ENCODE measurements at regions of chr11 and their contacts with region 1.

Region 1: GRCh38 chr11:66834501-66834845 is 8.8 kb upstream of the RCE1 start:
- DNase-seq: no peak
- H3K4me3 ChIP-seq: no peak overlapping the region
- H3K27ac ChIP-seq: no peak overlapping the region
- H3K4me1 ChIP-seq: no peaks in the 10 kb centered on the region
- H3K27me3 ChIP-seq: no peaks in the 10 kb centered on the region
- CTCF ChIP-seq: no peak
- POLR2A ChIP-seq: no peak

Region 2: DNA sequence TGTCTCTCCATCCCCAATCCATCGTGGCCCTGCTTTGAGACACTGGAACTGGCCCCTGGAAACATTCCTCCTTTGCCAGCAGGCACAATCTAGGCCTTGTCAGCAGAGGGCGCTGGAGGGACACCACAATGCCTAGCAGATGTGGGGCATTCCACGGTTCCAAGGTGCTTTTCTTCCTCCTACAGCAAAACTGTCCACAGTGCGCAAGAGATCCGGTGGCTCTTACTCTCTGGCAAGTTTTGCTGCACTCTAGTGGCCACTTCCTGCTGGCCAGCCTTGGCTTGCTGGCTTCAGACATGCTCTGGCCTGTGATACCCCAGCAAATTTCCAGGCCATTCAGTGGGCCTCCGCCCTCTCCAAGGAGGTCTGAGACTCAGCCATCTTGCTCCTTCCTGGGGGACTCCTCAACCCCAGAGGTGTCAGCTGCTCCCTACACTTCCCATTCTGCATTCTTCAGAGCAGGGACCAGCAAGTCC is 139.7 kb before region 1 on chr11:
- intact Hi-C with region 1: loop called (anchors 5 kb)
- DNase-seq: peak; percentile 90 to 93
- H3K4me3 ChIP-seq: no peak overlapping the region
- H3K27ac ChIP-seq: peak overlapping the region in 1 of 2 donors; percentile 43
- H3K4me1 ChIP-seq: no peaks in the 10 kb centered on the region
- H3K27me3 ChIP-seq: no peaks in the 10 kb centered on the region
- CTCF ChIP-seq: peak; percentile 85 to 99 (median 92)
- POLR2A ChIP-seq: no peak

Region 3: DNA sequence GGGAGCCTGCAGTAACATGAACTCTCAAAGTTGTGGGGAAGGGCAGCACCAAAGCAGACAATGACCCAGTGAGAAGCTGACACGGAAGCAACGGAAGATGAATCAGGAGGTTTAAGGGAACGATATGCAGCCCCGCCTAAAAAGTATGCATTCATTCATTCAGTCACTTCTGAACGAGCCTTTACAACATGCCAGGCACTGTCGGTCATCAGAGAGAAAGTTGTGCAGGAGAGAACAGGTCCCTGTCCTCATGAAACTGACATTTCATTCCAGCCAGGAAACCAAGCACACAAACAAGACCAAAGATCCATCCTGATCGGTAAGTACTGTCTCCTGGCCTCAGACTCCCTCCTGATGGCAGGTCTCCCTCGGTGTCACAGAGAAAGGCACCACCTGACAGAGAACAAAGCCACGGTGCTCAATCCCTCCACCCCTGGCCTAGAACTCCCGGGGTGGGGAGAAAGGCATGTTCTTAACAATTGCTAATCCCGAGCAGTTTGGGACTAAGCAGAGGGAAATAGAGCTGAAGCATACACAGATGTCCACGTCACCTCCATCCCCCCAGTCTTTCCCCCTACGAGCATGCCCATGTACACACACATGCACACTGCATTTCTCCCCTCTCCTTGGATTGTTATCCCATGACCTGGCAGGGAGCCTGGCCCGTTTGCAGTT is 71.7 kb after region 1 on chr11:
- intact Hi-C with region 1: no loop called
- DNase-seq: peak in 1 of 2 donors; percentile 32
- H3K4me3 ChIP-seq: no peak overlapping the region
- H3K27ac ChIP-seq: peak overlapping the region; percentile 52 to 76
- H3K4me1 ChIP-seq: no peaks in the 10 kb centered on the region
- H3K27me3 ChIP-seq: no peaks in the 10 kb centered on the region
- CTCF ChIP-seq: no peak
- POLR2A ChIP-seq: no peak